ENCODE measurements at regions of chr11 and their contacts with region 1.

Region 1: DNA sequence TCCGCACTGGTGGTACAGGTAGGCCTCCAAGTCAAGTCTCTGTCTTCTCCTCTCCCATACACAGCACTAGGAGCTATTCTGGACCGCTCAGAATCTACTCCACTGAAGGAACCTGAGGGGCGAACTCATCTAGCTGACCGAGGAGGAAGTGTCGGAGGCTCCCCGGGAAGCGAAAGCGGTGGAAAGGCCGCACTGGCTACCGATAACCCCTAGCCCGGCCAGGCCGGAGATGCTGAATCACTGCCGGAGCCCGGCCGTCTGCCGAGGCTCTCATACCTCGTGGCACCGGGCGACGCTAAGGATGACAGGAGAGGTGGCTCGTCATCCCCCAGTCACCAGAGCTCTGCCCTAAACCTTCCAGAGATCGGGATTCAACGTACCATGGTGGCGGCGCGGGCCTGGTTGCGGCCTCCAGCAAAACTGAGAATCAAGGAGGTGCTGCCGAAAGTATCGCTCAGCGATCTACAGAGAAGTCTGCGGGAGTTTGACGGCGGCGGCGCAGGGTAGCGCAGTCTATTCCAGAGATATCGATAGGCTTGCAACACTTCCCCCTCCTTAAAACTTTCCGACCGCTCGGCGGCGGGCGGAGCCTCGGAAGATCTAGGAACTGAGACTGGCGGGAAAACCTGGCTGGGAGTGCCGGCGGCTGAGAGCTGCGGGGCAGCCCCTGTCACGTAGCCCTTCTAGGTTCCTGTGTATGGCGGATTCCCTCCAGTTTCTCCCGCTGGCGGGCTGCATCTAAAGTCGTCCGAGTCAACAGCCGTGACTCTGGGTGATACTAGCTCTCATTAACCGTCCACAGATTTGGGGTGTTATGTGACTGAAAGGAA is at the start of gene PSMA1:
- DNase-seq: peak; percentile 98
- H3K4me3 ChIP-seq: peak within 1 kb of the TSS; percentile 76
- H3K27ac ChIP-seq: peak within 1 kb of the TSS; percentile 94
- H3K4me1 ChIP-seq: peaks cover 8% of the 10 kb centered on the region
- H3K27me3 ChIP-seq: no peaks in the 10 kb centered on the region
- CTCF ChIP-seq: no peak
- total RNA-seq, gene PSMA1: 238 and 267 TPM in 2 replicates

Region 2: DNA sequence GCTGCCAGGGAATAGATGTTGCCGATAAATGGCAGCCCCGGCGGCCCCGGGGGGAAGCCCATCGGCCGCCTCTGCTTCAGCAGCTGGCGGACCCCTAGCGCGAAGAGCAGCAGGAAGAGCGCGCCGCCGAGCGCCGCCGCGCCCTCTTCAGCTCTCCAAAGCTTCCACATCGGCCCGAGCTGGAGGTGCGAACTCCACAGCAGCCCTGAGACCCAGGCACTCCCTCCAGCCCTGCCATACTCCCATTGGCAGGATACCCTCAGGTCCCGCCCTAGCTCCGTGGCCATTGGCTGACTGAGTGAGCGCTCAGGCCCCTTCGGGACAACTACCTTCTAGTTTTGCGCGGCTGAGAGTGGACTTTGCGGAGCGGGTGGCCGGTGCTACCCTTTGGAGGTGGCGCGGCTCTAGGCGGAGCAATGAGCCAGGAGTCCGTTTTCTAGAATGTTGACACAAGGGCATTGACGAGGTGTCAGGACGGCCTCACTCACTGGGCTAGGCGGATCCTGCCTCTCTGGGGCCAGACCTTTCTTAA is 372.0 kb after region 1 on chr11 and contains the start of gene CYP2R1:
- CTCF ChIA-PET with region 1: no interaction called
- POLR2A ChIA-PET with region 1: no interaction called
- intact Hi-C with region 1: loop called (anchors 5 kb)
- DNase-seq: peak; percentile 96
- H3K4me3 ChIP-seq: peak within 1 kb of the TSS; percentile 63
- H3K27ac ChIP-seq: peak within 1 kb of the TSS; percentile 83
- H3K4me1 ChIP-seq: peaks cover 8% of the 10 kb centered on the region
- H3K27me3 ChIP-seq: no peaks in the 10 kb centered on the region
- CTCF ChIP-seq: no peak
- total RNA-seq, gene CYP2R1: 16.2 and 17.6 TPM in 2 replicates